ENCODE measurements at regions of chr15 and their contacts with region 1.

Region 1: GRCh38 chr15:79853458-79854328 is 43.1 kb downstream of the MTHFS start:
- DNase-seq: peak; percentile 52
- ATAC-seq: peak; percentile 99
- H3K4me3 ChIP-seq: no peak overlapping the region
- H3K27ac ChIP-seq: no peak overlapping the region
- H3K4me1 ChIP-seq: no peaks in the 10 kb centered on the region
- H3K27me3 ChIP-seq: no peaks in the 10 kb centered on the region
- CTCF ChIP-seq: peak; percentile 94 to 98 (median 97); a peak in 5 of 6 replicates
- EP300 ChIP-seq: no peak
- POLR2A ChIP-seq: no peak
- RAD21 ChIP-seq: peak; percentile 84

Region 2: DNA sequence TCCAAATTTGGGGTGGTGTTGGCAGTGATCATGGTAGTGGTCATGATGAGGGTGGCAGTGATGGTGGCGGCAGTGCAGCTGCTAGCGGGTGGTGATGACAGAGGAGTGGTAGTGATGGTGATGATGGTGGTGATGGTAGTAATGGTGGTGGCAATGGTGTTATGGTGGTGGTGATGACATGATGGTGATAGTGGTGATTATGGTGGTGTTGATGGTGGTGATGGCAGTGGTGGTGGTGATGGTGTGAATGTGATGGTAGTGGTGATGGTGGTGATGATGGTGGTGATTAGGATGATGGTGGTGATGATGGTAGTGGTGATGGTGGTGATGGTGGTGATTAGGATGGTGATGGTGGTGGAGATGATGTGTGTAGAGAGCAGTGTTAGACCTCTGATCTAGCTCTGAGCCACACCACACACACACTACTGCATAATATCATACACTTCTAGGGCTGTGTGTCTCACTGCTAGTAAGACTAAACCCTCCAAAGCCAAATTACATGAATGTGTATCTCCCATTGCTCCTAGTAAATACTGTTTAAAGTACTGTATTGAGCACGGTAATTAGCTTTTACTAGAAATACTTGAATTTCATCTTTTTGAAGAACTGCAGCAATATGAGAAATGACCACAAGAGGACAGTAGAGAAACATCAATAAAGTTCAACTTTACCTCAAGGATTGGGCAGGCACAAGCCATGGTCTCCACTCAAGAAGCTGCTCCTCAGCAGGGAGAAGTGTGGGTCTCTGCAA is 514.0 kb before region 1 on chr15:
- CTCF ChIA-PET with region 1: interaction called, 18 read pairs
- POLR2A ChIA-PET with region 1: no interaction called
- RAD21 ChIA-PET with region 1: interaction called, 13 read pairs
- SMC1A ChIA-PET with region 1: interaction called, 8 read pairs
- in situ Hi-C with region 1: no loop called
- intact Hi-C with region 1: loop called (anchors 10 kb)
- DNase-seq: no peak
- ATAC-seq: peak; percentile 71
- H3K4me3 ChIP-seq: no peak overlapping the region
- H3K27ac ChIP-seq: no peak overlapping the region
- H3K4me1 ChIP-seq: no peaks in the 10 kb centered on the region
- H3K27me3 ChIP-seq: no peaks in the 10 kb centered on the region
- CTCF ChIP-seq: peak; percentile 78 to 91 (median 83)
- EP300 ChIP-seq: no peak
- POLR2A ChIP-seq: no peak
- RAD21 ChIP-seq: peak; percentile 71

Region 3: DNA sequence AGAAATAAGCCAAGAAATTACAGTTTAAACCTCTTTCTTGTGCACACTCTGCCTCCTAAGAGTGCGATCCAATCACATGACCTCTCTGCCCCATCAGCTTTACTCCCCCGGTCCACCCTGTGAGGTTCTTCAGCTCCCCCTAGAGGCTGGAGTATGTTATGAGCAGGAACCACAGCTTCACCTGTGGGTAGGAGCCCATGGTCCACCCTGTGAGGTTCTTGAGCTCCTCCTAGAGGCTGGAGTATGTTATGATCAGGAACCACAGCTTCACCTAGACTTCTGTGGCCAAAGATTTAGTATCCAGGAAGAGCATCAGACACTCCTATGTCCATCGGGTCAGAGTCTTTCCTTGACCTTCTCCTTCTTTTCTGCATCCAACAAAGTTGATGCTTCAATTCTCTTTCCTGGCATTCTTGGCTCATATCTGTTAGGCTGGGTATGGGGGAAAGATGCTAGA is 257.6 kb before region 1 on chr15:
- CTCF ChIA-PET with region 1: interaction called, 30 read pairs
- POLR2A ChIA-PET with region 1: no interaction called
- RAD21 ChIA-PET with region 1: interaction called, 7 read pairs
- SMC1A ChIA-PET with region 1: interaction called, 6 read pairs
- in situ Hi-C with region 1: no loop called
- intact Hi-C with region 1: loop called (anchors 5 kb)
- DNase-seq: peak; percentile 71
- ATAC-seq: peak; percentile 100
- H3K4me3 ChIP-seq: no peak overlapping the region
- H3K27ac ChIP-seq: no peak overlapping the region
- H3K4me1 ChIP-seq: no peaks in the 10 kb centered on the region
- H3K27me3 ChIP-seq: no peaks in the 10 kb centered on the region
- CTCF ChIP-seq: peak; percentile 97 to 100 (median 99); a peak in 5 of 6 replicates
- EP300 ChIP-seq: no peak
- POLR2A ChIP-seq: no peak
- RAD21 ChIP-seq: peak; percentile 89

Region 4: DNA sequence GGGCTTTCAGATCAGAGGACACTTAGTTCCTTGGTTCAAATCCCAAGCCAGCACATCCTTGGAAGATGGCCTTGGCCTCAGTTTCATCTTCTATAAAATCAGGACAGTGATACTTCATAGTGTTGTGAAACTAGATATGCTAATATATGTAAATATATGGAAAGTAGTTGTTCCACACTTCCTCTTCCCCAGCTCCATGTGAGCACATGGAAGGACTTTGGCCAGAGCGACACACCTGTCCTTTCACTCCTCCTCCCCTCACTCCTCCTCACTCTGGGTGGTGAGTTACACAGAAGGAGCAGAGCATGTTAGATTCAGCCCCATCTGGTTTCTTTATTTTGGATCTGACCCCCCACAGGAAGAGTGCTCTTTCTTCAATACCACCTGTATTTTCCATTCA is 22.1 kb before region 1 on chr15:
- CTCF ChIA-PET with region 1: interaction called, 13 read pairs
- POLR2A ChIA-PET with region 1: no interaction called
- RAD21 ChIA-PET with region 1: no interaction called
- SMC1A ChIA-PET with region 1: interaction called, 4 read pairs
- in situ Hi-C with region 1: no loop called
- intact Hi-C with region 1: no loop called
- DNase-seq: no peak
- ATAC-seq: no peak
- H3K4me3 ChIP-seq: no peak overlapping the region
- H3K27ac ChIP-seq: no peak overlapping the region
- H3K4me1 ChIP-seq: peaks cover 8% of the 10 kb centered on the region
- H3K27me3 ChIP-seq: no peaks in the 10 kb centered on the region
- CTCF ChIP-seq: no peak
- EP300 ChIP-seq: no peak
- POLR2A ChIP-seq: no peak
- RAD21 ChIP-seq: no peak

Region 5: GRCh38 chr15:79872358-79873017 is 18.8 kb after region 1 on chr15:
- CTCF ChIA-PET with region 1: interaction called, 102 read pairs
- POLR2A ChIA-PET with region 1: interaction called, 4 read pairs
- RAD21 ChIA-PET with region 1: interaction called, 9 read pairs
- SMC1A ChIA-PET with region 1: interaction called, 18 read pairs
- in situ Hi-C with region 1: no loop called
- intact Hi-C with region 1: no loop called
- DNase-seq: no peak
- ATAC-seq: peak; percentile 54
- H3K4me3 ChIP-seq: no peak overlapping the region
- H3K27ac ChIP-seq: no peak overlapping the region
- H3K4me1 ChIP-seq: no peaks in the 10 kb centered on the region
- H3K27me3 ChIP-seq: no peaks in the 10 kb centered on the region
- CTCF ChIP-seq: no peak
- EP300 ChIP-seq: no peak
- POLR2A ChIP-seq: no peak
- RAD21 ChIP-seq: no peak

Region 6: DNA sequence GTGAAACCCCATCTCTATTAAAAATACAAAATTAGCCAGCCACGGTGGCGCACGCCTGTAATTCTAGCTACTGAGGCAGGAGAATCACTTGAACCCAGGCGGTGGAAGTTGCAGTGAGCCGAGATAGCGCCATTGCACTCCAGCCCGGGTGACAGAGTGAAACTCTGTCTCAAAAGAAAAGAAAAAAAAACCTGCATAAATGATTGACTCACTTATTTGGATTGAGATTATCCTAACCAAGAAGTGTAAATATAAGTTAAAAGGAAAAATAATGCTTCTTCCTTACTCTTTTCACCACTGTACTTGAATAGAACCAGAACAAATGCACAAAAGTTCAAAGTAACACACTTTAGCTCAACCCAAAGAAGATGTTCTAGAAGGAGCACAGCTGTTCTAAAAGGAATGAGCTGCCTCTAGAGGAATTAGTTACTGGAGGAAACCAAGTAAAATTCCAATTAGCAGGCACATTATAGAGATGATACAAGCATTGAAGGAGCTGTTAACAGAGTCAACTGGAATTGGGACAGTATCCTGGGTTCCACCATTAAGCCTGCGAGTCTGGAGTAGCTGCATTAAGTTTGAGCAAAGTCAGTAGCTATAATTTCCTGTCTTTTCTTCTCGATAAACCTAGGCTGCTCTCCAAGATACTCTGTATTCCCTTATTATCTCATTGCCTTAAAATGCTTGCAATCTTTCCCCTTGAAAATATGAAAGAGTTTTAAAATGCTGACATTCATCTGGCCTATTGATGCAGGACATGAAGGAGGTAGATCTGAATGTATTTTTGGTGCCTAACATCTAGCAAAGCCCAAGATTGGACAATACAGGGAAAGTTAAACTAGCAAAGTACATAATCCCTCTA is 33.6 kb after region 1 on chr15:
- CTCF ChIA-PET with region 1: interaction called, 22 read pairs
- POLR2A ChIA-PET with region 1: interaction called, 5 read pairs
- RAD21 ChIA-PET with region 1: interaction called, 4 read pairs
- SMC1A ChIA-PET with region 1: interaction called, 5 read pairs
- in situ Hi-C with region 1: no loop called
- intact Hi-C with region 1: no loop called
- DNase-seq: no peak
- ATAC-seq: no peak
- H3K4me3 ChIP-seq: no peak overlapping the region
- H3K27ac ChIP-seq: no peak overlapping the region
- H3K4me1 ChIP-seq: peaks cover 5% of the 10 kb centered on the region
- H3K27me3 ChIP-seq: no peaks in the 10 kb centered on the region
- CTCF ChIP-seq: no peak
- EP300 ChIP-seq: no peak
- POLR2A ChIP-seq: no peak
- RAD21 ChIP-seq: no peak

Region 7: GRCh38 chr15:79989682-79990081 is 136.0 kb after region 1 on chr15:
- CTCF ChIA-PET with region 1: interaction called, 73 read pairs
- POLR2A ChIA-PET with region 1: interaction called, 6 read pairs
- RAD21 ChIA-PET with region 1: interaction called, 23 read pairs
- SMC1A ChIA-PET with region 1: interaction called, 71 read pairs
- in situ Hi-C with region 1: no loop called
- intact Hi-C with region 1: loop called (anchors 2 kb)
- DNase-seq: no peak
- ATAC-seq: no peak
- H3K4me3 ChIP-seq: no peak overlapping the region
- H3K27ac ChIP-seq: no peak overlapping the region
- H3K4me1 ChIP-seq: peaks cover 18% of the 10 kb centered on the region
- H3K27me3 ChIP-seq: no peaks in the 10 kb centered on the region
- CTCF ChIP-seq: no peak
- EP300 ChIP-seq: no peak
- POLR2A ChIP-seq: no peak
- RAD21 ChIP-seq: no peak

Measured in GM12878 (cell line).